ENCODE measurements at regions of chr5 and their contacts with region 1.

Region 1: GRCh38 chr5:138138949-138139780 is at the start of gene NME5:
- DNase-seq: no peak
- H3K4me3 Mint-ChIP-seq: no peak within 1 kb of the TSS
- H3K27ac Mint-ChIP-seq: no peak within 1 kb of the TSS
- H3K4me1 Mint-ChIP-seq: no peaks in the 10 kb centered on the region
- H3K27me3 Mint-ChIP-seq: peaks cover 12% of the 10 kb centered on the region
- total RNA-seq, gene NME5: not detected in 2 replicates

Region 2: DNA sequence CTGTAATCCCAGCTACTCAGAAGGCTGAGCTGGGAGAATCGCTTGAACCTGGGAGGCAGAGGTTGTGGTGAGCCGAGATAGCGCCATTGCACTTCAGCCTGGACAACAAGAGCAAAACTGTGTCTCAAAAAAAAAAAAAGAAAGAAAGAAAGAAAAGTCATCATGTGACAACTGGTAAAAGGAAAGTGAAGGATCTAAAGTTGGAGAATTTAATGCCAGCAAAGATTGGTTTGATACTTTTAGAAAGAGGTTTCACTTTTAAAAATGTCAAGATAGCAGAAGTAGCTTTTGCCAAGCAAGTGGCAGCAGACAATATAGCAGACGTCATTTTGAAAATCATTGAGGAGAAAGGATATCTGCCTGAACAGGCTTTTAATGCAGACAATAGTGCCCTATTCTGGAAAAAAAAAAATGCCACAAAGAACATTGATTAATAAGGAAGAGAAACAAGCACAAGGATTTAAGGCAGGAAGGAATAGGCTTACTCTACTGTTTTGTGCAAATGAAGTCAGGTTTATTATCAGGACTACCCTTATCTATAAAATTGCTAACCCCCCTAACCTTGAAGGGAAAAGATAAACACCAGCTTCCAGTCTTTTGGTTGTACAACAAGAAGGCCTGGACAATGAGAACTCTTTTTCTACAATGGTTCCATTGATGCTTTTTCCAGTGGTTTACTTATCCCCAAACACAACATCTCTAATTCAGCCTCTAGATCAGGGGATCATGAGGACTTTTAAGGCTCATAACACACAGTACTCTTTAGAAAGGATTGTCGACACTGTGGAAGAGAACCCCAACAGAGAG is 238.0 kb before region 1 on chr5:
- intact Hi-C with region 1: loop called (anchors 10 kb)
- DNase-seq: no peak
- H3K4me3 Mint-ChIP-seq: no peak overlapping the region
- H3K27ac Mint-ChIP-seq: no peak overlapping the region
- H3K4me1 Mint-ChIP-seq: peaks cover 8% of the 10 kb centered on the region
- H3K27me3 Mint-ChIP-seq: peaks cover 5% of the 10 kb centered on the region

Measured in activated T-helper 1 cell treated with anti-CD3 and anti-CD28 coated beads, Interleukin-12 subunit alpha, Interleukin-12 subunit beta, Interleukin-2, Interleukin-4 antibody, amounts not matched to agents 30 ng/mL and 10 ng/mL and 1 ng/mL, durations not matched to agents 14 hours and 24 hours and 36 hours (primary cell).